Naive thymus-derived CD4-positive, alpha-beta T cell (primary cell): ENCODE measurements at regions of chr11 and their contacts with region 1.

Region 1: DNA sequence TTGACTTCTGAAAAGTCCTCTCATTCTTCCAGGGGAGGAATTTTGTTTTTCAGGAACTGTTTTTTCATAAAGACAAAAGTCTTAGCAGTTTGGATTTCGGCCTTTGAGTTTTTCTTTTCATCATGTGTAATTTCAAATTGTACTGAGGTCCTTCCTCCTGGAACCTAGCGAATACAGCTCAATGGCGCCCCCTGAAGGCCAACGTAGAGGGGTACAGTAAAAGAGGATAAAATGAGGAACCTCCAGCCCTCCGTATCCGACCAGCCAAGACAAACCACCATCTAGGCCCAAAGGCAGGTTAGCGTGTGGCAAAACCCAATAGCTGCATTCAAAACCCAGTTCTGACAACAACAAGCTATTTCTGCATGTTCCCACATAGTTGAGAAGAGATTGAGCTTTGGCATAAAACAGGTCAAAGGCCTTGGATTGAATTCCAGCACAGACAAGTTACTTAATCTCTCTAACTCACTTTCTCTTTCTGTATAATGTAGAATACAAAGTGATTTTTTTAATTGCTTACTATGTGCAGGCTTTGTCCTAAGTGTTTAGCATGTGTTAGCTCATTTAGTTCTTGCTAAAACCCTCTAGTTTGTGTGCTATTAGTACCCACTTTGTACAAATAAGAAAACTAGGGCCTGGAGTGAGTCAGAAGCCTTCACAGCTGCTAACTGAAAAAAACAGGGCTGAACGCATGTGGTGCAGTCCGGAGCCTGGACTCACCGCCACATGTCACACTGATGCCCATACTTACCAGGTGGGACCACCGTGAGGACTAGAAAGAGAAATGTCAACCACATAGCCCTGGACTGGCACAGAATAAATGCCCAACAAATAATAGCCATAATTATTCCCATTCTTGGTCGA is 43.2 kb upstream of the ETS1 start:
- DNase-seq: peak; percentile 78 to 93 (median 86)
- ATAC-seq: peak; percentile 92
- H3K4me3 ChIP-seq: peak overlapping the region; percentile 17
- H3K4me3 Mint-ChIP-seq: peak overlapping the region; percentile 56 to 85 (median 76)
- H3K27ac ChIP-seq: peak overlapping the region; percentile 63
- H3K27ac Mint-ChIP-seq: peak overlapping the region; percentile 88 to 100 (median 95)
- H3K4me1 ChIP-seq: peaks cover 53 to 61% of the 10 kb centered on the region in 2 donors
- H3K4me1 Mint-ChIP-seq: peaks cover 46 to 73% (median 68%) of the 10 kb centered on the region in 7 donors
- H3K27me3 ChIP-seq: no peaks in the 10 kb centered on the region
- H3K27me3 Mint-ChIP-seq: no peaks in the 10 kb centered on the region

Region 2: GRCh38 chr11:128157423-128158298 is 472.9 kb before region 1 on chr11:
- CTCF ChIA-PET with region 1: interaction called, 9 read pairs
- POLR2A ChIA-PET with region 1: no interaction called
- intact Hi-C with region 1: loop called (anchors 1 kb)
- DNase-seq: peak in 8 of 9 donors; percentile 44 to 82 (median 74)
- ATAC-seq: peak; percentile 96
- H3K4me3 ChIP-seq: peak overlapping the region; percentile 33
- H3K4me3 Mint-ChIP-seq: peak overlapping the region in 9 of 10 donors; percentile 64 to 87 (median 77)
- H3K27ac ChIP-seq: peak overlapping the region; percentile 4
- H3K27ac Mint-ChIP-seq: peak overlapping the region in 7 of 9 donors; percentile 4 to 86 (median 58)
- H3K4me1 ChIP-seq: no peaks in the 10 kb centered on the region
- H3K4me1 Mint-ChIP-seq: peaks cover 0 to 10% (median 4%) of the 10 kb centered on the region in 7 donors
- H3K27me3 ChIP-seq: no peaks in the 10 kb centered on the region
- H3K27me3 Mint-ChIP-seq: peaks cover 0 to 28% (median 0%) of the 10 kb centered on the region in 5 donors

Region 3: DNA sequence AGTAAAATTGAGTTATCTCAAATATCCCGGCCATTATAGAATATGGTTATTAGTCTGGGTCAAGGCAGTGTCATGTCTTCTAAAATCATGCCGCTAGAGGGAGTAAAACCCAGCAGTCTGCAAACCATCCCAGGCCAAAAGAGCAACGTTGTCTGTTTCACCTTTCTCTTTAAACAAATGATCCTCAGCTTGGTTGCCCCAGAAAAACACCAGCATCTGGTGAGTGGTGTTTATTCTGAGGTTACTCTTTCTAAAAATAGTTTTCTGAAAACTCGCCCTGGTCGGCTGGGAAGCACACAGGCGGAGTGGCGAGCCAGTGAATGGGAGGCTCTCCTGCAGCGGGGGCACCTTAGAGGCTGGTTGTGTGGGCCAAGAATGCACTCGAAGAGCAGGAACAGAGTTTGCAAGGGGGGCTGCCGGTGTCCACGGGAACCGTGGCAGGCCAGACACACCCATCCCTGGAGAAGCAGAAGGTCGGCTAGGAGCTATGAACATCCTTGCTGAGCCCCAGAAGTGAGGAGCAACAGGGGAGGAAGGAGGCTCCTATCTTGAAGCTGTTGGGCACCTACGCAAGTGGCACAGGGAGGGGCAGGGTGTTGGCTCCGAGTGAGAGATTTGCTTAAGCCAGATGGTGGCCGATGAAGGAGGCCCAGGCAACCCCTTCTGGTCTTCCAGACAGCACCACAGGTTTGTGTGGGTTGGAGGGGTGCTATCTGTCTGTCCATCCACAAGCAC is 340.3 kb before region 1 on chr11:
- CTCF ChIA-PET with region 1: interaction called, 148 read pairs
- POLR2A ChIA-PET with region 1: interaction called, 58 read pairs
- intact Hi-C with region 1: loop called (anchors 1 kb)
- DNase-seq: peak; percentile 50 to 87 (median 81)
- ATAC-seq: peak; percentile 86
- H3K4me3 ChIP-seq: peak overlapping the region; percentile 61
- H3K4me3 Mint-ChIP-seq: peak overlapping the region; percentile 86 to 98 (median 90)
- H3K27ac ChIP-seq: peak overlapping the region; percentile 98
- H3K27ac Mint-ChIP-seq: peak overlapping the region; percentile 93 to 100 (median 98)
- H3K4me1 ChIP-seq: peaks cover 51 to 79% of the 10 kb centered on the region in 2 donors
- H3K4me1 Mint-ChIP-seq: peaks cover 62 to 100% (median 96%) of the 10 kb centered on the region in 7 donors
- H3K27me3 ChIP-seq: no peaks in the 10 kb centered on the region
- H3K27me3 Mint-ChIP-seq: no peaks in the 10 kb centered on the region

Region 4: GRCh38 chr11:128463371-128463829 is 167.2 kb before region 1 on chr11:
- CTCF ChIA-PET with region 1: interaction called, 13 read pairs
- POLR2A ChIA-PET with region 1: interaction called, 22 read pairs
- intact Hi-C with region 1: loop called (anchors 1 to 2 kb)
- DNase-seq: no peak
- ATAC-seq: no peak
- H3K4me3 ChIP-seq: peak overlapping the region; percentile 37
- H3K4me3 Mint-ChIP-seq: peak overlapping the region; percentile 73 to 99 (median 80)
- H3K27ac ChIP-seq: peak overlapping the region; percentile 97
- H3K27ac Mint-ChIP-seq: peak overlapping the region; percentile 88 to 100 (median 98)
- H3K4me1 ChIP-seq: peaks cover 74 to 86% of the 10 kb centered on the region in 2 donors
- H3K4me1 Mint-ChIP-seq: peaks cover 64 to 100% (median 93%) of the 10 kb centered on the region in 7 donors
- H3K27me3 ChIP-seq: no peaks in the 10 kb centered on the region
- H3K27me3 Mint-ChIP-seq: no peaks in the 10 kb centered on the region

Region 5: GRCh38 chr11:128497061-128497775 is 133.4 kb before region 1 on chr11:
- CTCF ChIA-PET with region 1: interaction called, 12 read pairs
- POLR2A ChIA-PET with region 1: interaction called, 9 read pairs
- intact Hi-C with region 1: no loop called
- DNase-seq: no peak
- ATAC-seq: peak; percentile 32
- H3K4me3 ChIP-seq: peak overlapping the region; percentile 36
- H3K4me3 Mint-ChIP-seq: peak overlapping the region; percentile 81 to 100 (median 94)
- H3K27ac ChIP-seq: peak overlapping the region; percentile 97
- H3K27ac Mint-ChIP-seq: peak overlapping the region; percentile 89 to 99 (median 95)
- H3K4me1 ChIP-seq: peaks cover 90 to 95% of the 10 kb centered on the region in 2 donors
- H3K4me1 Mint-ChIP-seq: peaks cover 83 to 100% (median 97%) of the 10 kb centered on the region in 7 donors
- H3K27me3 ChIP-seq: no peaks in the 10 kb centered on the region
- H3K27me3 Mint-ChIP-seq: no peaks in the 10 kb centered on the region

Region 6: DNA sequence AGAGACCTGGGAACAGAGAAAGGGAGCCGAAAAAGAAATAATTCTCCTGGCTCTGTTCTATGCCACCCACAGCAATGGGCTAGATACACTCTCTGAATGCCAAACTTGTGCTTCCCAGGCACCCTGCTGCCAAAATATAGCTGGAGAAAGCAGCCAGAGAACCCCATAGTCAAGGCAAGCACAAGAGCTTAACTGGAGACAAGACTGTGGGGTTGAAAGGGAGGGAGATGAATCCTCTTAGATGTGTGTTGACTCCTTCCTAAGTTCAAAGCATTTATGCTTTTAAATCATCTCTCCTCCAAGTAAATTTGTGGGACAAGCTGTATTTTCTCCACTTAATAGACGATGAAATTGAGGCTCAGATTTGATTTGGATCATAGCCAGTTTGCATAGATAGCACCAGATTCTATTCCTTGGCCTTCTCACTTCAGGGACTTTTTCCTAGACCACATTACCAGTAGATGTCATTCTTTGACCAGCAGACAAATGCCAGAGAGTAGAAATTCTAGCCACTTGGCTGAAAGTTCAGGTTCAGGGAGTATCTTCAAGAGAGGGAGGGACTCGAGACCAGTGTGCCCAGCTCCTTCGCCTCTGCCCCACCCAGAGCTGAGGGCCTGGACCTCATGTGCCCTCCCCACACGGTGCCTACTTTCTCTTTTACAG is 26.7 kb before region 1 on chr11:
- CTCF ChIA-PET with region 1: interaction called, 14 read pairs
- POLR2A ChIA-PET with region 1: interaction called, 145 read pairs
- intact Hi-C with region 1: loop called in 1 of 2 experiments (anchors 1 kb)
- DNase-seq: no peak
- ATAC-seq: no peak
- H3K4me3 ChIP-seq: no peak overlapping the region
- H3K4me3 Mint-ChIP-seq: no peak overlapping the region
- H3K27ac ChIP-seq: no peak overlapping the region
- H3K27ac Mint-ChIP-seq: peak overlapping the region in 3 of 9 donors; percentile 28 to 77 (median 32)
- H3K4me1 ChIP-seq: peaks cover 0 to 34% of the 10 kb centered on the region in 2 donors
- H3K4me1 Mint-ChIP-seq: peaks cover 10 to 86% (median 70%) of the 10 kb centered on the region in 7 donors
- H3K27me3 ChIP-seq: no peaks in the 10 kb centered on the region
- H3K27me3 Mint-ChIP-seq: no peaks in the 10 kb centered on the region

Region 7: DNA sequence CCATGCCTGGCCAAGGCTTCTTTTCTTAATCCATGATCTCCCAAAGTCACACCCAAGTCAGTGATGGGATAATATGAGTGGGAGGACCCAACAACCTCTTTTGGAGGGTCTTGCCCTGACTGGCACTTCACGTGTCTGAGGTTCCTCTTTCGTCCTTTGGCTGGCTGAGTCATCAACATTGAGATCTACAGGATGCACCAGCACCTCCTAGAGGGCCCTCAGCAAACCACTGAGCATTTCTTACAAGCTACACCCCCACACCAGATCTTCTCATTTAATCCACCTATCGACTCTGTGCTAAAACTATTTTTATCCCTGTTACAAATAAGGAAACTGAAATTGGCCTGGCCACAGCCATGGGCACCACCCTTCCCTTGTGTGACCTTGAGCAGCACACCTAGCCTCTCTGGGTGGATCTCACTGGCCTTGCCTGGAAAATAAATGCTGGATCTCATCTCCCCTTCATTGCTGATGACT is 126.7 kb after region 1 on chr11:
- CTCF ChIA-PET with region 1: interaction called, 30 read pairs
- POLR2A ChIA-PET with region 1: interaction called, 7 read pairs
- intact Hi-C with region 1: loop called (anchors 1 kb)
- DNase-seq: peak; percentile 27 to 74 (median 61)
- ATAC-seq: peak; percentile 96
- H3K4me3 ChIP-seq: no peak overlapping the region
- H3K4me3 Mint-ChIP-seq: peak overlapping the region in 8 of 10 donors; percentile 9 to 62 (median 40)
- H3K27ac ChIP-seq: no peak overlapping the region
- H3K27ac Mint-ChIP-seq: peak overlapping the region; percentile 43 to 92 (median 84)
- H3K4me1 ChIP-seq: peaks cover 36 to 49% of the 10 kb centered on the region in 2 donors
- H3K4me1 Mint-ChIP-seq: peaks cover 70 to 96% (median 89%) of the 10 kb centered on the region in 7 donors
- H3K27me3 ChIP-seq: no peaks in the 10 kb centered on the region
- H3K27me3 Mint-ChIP-seq: no peaks in the 10 kb centered on the region